Calu3 (cell line): ENCODE measurements at regions of chr16 and their contacts with region 1.

Region 1: DNA sequence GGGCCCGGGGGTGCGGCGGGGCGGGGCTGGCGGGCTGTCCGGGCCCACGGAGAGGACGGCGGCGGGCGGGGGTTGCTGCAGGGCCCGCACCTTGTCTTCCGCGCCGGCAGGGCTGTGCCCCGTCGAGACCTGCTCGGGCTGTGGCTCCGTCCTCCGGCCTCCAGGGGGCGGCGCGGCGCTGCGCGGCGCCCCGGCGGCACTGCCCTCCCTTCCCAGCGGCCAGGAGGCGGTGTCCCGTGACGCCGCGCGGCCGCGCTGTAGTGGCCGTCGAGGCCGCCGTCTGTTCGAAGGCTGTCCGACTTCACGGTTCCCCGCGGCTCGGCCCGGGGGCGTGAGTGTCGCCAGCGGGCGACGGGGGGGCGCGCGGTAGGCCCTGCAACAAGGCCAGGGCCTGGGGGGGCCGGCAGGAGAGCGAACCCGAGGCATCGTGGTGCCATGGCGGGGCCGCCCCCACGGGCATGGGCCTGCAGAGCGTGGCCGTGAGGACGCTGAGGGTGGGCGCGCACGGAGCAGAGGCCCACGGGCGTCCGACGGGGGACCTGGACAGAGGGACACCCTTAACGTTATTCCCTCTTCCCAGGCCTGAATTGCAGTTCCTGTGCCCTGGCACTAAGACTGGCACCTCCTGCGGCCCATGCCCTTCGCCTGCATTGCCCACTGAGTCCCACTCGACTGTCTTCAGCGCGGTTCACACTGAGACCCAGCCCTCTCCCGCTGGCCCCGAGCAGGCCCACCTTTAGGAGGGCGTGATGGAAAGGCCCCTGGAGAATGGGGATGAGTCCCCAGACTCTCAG is at the start of gene PLEKHG4:
- DNase-seq: peak; percentile 87
- H3K4me3 Mint-ChIP-seq: peak within 1 kb of the TSS; percentile 70
- H3K27ac Mint-ChIP-seq: peak within 1 kb of the TSS; percentile 51
- H3K4me1 Mint-ChIP-seq: peaks cover 28% of the 10 kb centered on the region
- H3K27me3 Mint-ChIP-seq: peaks cover 10% of the 10 kb centered on the region
- CTCF ChIP-seq: peak; percentile 94
- total RNA-seq, gene PLEKHG4: 5.5 and 9.2 TPM in 2 replicates

Region 2: GRCh38 chr16:67268136-67268579 is 11.3 kb before region 1 on chr16:
- CTCF ChIA-PET with region 1: interaction called, 13 read pairs
- intact Hi-C with region 1: no loop called
- DNase-seq: peak; percentile 73
- H3K4me3 Mint-ChIP-seq: no peak overlapping the region
- H3K27ac Mint-ChIP-seq: peak overlapping the region; percentile 35
- H3K4me1 Mint-ChIP-seq: peaks cover 11% of the 10 kb centered on the region
- H3K27me3 Mint-ChIP-seq: peaks cover 8% of the 10 kb centered on the region
- CTCF ChIP-seq: no peak

Region 3: DNA sequence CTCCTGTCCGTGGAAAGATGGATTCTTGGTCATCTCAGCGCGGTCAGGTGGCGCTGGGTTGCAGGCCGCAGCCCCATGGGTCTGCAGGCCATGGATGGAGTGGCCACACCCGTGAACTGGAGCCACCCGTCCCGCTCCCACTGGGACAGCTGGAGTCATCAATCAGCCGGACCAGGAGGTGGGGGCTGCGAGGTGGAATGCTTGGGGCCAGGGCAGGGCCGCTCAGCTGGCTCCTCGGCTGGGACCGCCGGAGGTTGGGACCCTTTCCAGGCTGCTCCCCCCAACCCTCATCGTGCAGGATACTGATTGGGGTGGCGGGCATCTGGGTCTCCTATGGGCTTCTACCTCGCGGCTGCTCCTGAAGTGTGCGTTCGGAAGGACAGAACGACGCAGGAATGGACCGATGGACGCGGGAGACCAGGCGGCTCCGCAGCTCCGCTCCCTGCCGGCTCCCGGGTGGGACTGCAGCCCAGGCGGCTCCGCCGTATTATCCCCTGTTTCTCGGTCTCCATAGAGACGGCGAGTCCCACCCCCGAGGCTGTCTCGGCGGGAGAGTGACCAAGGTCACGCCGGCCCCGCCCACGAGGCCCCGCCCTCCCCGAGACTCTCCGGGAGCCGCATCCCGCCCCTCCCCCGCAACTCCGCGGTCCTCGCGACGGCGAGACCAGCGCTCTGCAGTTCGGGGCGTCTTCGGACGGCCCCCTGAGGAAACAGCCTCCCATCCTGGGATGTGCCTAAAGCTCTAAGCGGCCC is 113.7 kb after region 1 on chr16 and contains the start of gene TPPP3:
- CTCF ChIA-PET with region 1: interaction called, 12 read pairs
- intact Hi-C with region 1: no loop called
- DNase-seq: peak; percentile 94
- H3K4me3 Mint-ChIP-seq: peak within 1 kb of the TSS; percentile 74
- H3K27ac Mint-ChIP-seq: peak within 1 kb of the TSS; percentile 37
- H3K4me1 Mint-ChIP-seq: peaks cover 45% of the 10 kb centered on the region
- H3K27me3 Mint-ChIP-seq: no peaks in the 10 kb centered on the region
- CTCF ChIP-seq: peak; percentile 69
- total RNA-seq, gene TPPP3: 8.5 and 8.8 TPM in 2 replicates